CD4-positive, alpha-beta memory T cell (primary cell): ENCODE measurements at regions of chr4 and their contacts with region 1.

Region 1: DNA sequence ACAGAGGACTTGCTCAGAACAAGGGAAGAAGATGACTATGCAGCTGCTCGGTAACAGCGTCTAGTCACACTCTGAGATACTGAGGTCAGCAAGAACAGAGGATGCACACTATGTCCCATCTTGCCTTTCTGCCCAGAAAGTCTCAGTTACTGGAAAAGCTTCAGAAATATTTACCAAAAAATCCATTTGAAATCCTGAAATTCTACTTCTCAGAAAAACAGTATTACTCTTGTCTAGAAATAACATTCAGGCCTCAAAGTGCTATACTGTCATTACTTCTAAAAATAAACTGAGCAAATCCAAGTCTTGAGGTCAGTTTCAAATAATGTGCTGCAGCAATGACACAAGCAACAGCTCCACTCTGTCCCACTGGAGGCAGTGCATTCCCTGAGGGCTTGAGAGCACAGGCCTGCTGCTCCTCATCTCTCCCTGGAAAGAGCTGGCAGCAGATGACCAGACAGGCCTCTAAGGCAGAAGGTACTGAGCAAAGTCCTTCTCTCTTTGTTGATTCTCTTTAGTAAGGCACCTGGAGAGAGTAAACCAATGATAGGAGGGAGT is 76.9 kb downstream of the CAMK2D start:
- DNase-seq: no peak
- H3K4me3 ChIP-seq: no peak overlapping the region
- H3K4me3 Mint-ChIP-seq: peak overlapping the region in 4 of 8 donors; percentile 12 to 82 (median 50)
- H3K27ac ChIP-seq: no peak overlapping the region
- H3K27ac Mint-ChIP-seq: peak overlapping the region in 6 of 7 donors; percentile 48 to 96 (median 83)
- H3K4me1 ChIP-seq: peaks cover 40% of the 10 kb centered on the region
- H3K4me1 Mint-ChIP-seq: peaks cover 42 to 54% (median 47%) of the 10 kb centered on the region in 4 donors
- H3K27me3 ChIP-seq: no peaks in the 10 kb centered on the region
- H3K27me3 Mint-ChIP-seq: no peaks in the 10 kb centered on the region

Region 2: GRCh38 chr4:113673450-113673849 is 11.2 kb before region 1 on chr4:
- CTCF ChIA-PET with region 1: interaction called, 3 read pairs
- POLR2A ChIA-PET with region 1: interaction called, 4 read pairs
- intact Hi-C with region 1: loop called (anchors 1 kb)
- DNase-seq: peak in 1 of 5 donors; percentile 52
- H3K4me3 ChIP-seq: no peak overlapping the region
- H3K4me3 Mint-ChIP-seq: peak overlapping the region in 2 of 8 donors; percentile 10 to 28
- H3K27ac ChIP-seq: no peak overlapping the region
- H3K27ac Mint-ChIP-seq: peak overlapping the region in 2 of 7 donors; percentile 57 to 76
- H3K4me1 ChIP-seq: peaks cover 32% of the 10 kb centered on the region
- H3K4me1 Mint-ChIP-seq: peaks cover 31 to 54% (median 40%) of the 10 kb centered on the region in 4 donors
- H3K27me3 ChIP-seq: no peaks in the 10 kb centered on the region
- H3K27me3 Mint-ChIP-seq: no peaks in the 10 kb centered on the region

Region 3: GRCh38 chr4:113708250-113708649 is 23.6 kb after region 1 on chr4:
- CTCF ChIA-PET with region 1: no interaction called
- POLR2A ChIA-PET with region 1: no interaction called
- intact Hi-C with region 1: no loop called
- DNase-seq: no peak
- H3K4me3 ChIP-seq: no peak overlapping the region
- H3K4me3 Mint-ChIP-seq: no peak overlapping the region
- H3K27ac ChIP-seq: no peak overlapping the region
- H3K27ac Mint-ChIP-seq: no peak overlapping the region
- H3K4me1 ChIP-seq: no peaks in the 10 kb centered on the region
- H3K4me1 Mint-ChIP-seq: peaks cover 14 to 32% (median 21%) of the 10 kb centered on the region in 4 donors
- H3K27me3 ChIP-seq: no peaks in the 10 kb centered on the region
- H3K27me3 Mint-ChIP-seq: no peaks in the 10 kb centered on the region

Region 4: GRCh38 chr4:113837397-113837796 is 152.8 kb after region 1 on chr4:
- CTCF ChIA-PET with region 1: no interaction called
- POLR2A ChIA-PET with region 1: no interaction called
- intact Hi-C with region 1: no loop called
- DNase-seq: no peak
- H3K4me3 ChIP-seq: no peak overlapping the region
- H3K4me3 Mint-ChIP-seq: no peak overlapping the region
- H3K27ac ChIP-seq: no peak overlapping the region
- H3K27ac Mint-ChIP-seq: no peak overlapping the region
- H3K4me1 ChIP-seq: no peaks in the 10 kb centered on the region
- H3K4me1 Mint-ChIP-seq: peaks cover 0 to 2% (median 0%) of the 10 kb centered on the region in 4 donors
- H3K27me3 ChIP-seq: no peaks in the 10 kb centered on the region
- H3K27me3 Mint-ChIP-seq: peaks cover 0 to 1% of the 10 kb centered on the region in 2 donors

Region 5: DNA sequence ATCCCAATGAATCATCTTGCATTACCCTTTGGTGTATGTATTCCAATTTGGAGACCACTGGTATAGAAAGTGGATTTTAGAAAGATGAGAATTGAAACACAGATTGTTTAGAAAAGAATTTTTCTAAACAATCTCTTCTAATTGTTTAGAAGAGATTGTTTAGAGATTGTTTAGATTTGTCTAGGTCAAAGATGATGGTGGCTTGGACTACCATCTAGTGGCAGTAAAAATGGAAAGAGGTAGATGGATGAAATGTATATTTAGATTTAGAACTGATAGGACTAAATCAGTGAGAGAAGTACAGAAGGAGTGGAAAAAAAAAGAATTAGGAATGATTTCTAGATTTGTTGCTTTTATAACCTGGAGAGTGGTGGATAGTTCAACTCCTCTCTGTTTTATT is 224.2 kb after region 1 on chr4:
- CTCF ChIA-PET with region 1: no interaction called
- POLR2A ChIA-PET with region 1: no interaction called
- intact Hi-C with region 1: loop called (anchors 5 kb)
- DNase-seq: peak; percentile 12 to 36 (median 24)
- H3K4me3 ChIP-seq: no peak overlapping the region
- H3K4me3 Mint-ChIP-seq: no peak overlapping the region
- H3K27ac ChIP-seq: no peak overlapping the region
- H3K27ac Mint-ChIP-seq: peak overlapping the region in 1 of 7 donors; percentile 14
- H3K4me1 ChIP-seq: peaks cover 28% of the 10 kb centered on the region
- H3K4me1 Mint-ChIP-seq: peaks cover 13 to 36% (median 21%) of the 10 kb centered on the region in 4 donors
- H3K27me3 ChIP-seq: no peaks in the 10 kb centered on the region
- H3K27me3 Mint-ChIP-seq: no peaks in the 10 kb centered on the region